CD8-positive, alpha-beta memory T cell (primary cell): ENCODE measurements at regions of chr20 and their contacts with region 1.

Region 1: GRCh38 chr20:44609511-44610312 is 27.3 kb downstream of the PKIG start:
- DNase-seq: peak; percentile 74 to 87 (median 78)
- H3K4me3 ChIP-seq: no peak overlapping the region
- H3K4me3 Mint-ChIP-seq: peak overlapping the region; percentile 64 to 88 (median 72)
- H3K27ac ChIP-seq: peak overlapping the region; percentile 28
- H3K27ac Mint-ChIP-seq: peak overlapping the region; percentile 93 to 100 (median 98)
- H3K4me1 ChIP-seq: peaks cover 30% of the 10 kb centered on the region
- H3K4me1 Mint-ChIP-seq: peaks cover 32 to 37% (median 34%) of the 10 kb centered on the region in 3 donors
- H3K27me3 ChIP-seq: no peaks in the 10 kb centered on the region
- H3K27me3 Mint-ChIP-seq: peaks cover 0 to 4% of the 10 kb centered on the region in 2 donors

Region 2: GRCh38 chr20:44388466-44389023 is 221.2 kb before region 1 on chr20:
- CTCF ChIA-PET with region 1: interaction called, 18 read pairs
- POLR2A ChIA-PET with region 1: no interaction called
- DNase-seq: peak; percentile 37 to 64 (median 39)
- H3K4me3 ChIP-seq: no peak overlapping the region
- H3K4me3 Mint-ChIP-seq: no peak overlapping the region
- H3K27ac ChIP-seq: no peak overlapping the region
- H3K27ac Mint-ChIP-seq: peak overlapping the region in 2 of 8 donors; percentile 42 to 68
- H3K4me1 ChIP-seq: peaks cover 7% of the 10 kb centered on the region
- H3K4me1 Mint-ChIP-seq: peaks cover 3 to 8% (median 7%) of the 10 kb centered on the region in 3 donors
- H3K27me3 ChIP-seq: no peaks in the 10 kb centered on the region
- H3K27me3 Mint-ChIP-seq: peaks cover 12 to 41% of the 10 kb centered on the region in 2 donors

Region 3: DNA sequence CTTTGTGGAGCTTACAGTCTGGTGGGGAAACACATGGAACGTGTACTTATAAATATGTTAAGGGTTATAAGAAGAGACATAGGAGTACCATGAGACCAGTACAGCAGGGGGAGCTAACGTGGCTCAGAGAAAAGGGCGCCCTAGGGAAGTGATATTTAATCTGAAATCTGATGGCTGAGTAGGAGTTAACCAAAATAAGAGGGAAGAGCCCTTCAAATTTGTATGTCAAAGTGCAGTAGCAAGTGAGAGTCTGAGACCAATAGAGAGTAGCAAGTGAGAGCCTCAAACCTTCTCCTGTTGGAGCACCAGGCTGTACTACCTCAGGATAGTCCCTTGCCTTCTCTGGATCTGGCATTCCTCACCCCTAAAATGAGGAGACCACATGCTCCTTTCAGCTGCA is 33.4 kb before region 1 on chr20:
- CTCF ChIA-PET with region 1: no interaction called
- POLR2A ChIA-PET with region 1: no interaction called
- DNase-seq: peak in 1 of 5 donors; percentile 3
- H3K4me3 ChIP-seq: no peak overlapping the region
- H3K4me3 Mint-ChIP-seq: no peak overlapping the region
- H3K27ac ChIP-seq: no peak overlapping the region
- H3K27ac Mint-ChIP-seq: peak overlapping the region in 2 of 8 donors; percentile 10 to 28
- H3K4me1 ChIP-seq: no peaks in the 10 kb centered on the region
- H3K4me1 Mint-ChIP-seq: peaks cover 9 to 14% (median 11%) of the 10 kb centered on the region in 3 donors
- H3K27me3 ChIP-seq: no peaks in the 10 kb centered on the region
- H3K27me3 Mint-ChIP-seq: peaks cover 0 to 7% of the 10 kb centered on the region in 2 donors

Region 4: DNA sequence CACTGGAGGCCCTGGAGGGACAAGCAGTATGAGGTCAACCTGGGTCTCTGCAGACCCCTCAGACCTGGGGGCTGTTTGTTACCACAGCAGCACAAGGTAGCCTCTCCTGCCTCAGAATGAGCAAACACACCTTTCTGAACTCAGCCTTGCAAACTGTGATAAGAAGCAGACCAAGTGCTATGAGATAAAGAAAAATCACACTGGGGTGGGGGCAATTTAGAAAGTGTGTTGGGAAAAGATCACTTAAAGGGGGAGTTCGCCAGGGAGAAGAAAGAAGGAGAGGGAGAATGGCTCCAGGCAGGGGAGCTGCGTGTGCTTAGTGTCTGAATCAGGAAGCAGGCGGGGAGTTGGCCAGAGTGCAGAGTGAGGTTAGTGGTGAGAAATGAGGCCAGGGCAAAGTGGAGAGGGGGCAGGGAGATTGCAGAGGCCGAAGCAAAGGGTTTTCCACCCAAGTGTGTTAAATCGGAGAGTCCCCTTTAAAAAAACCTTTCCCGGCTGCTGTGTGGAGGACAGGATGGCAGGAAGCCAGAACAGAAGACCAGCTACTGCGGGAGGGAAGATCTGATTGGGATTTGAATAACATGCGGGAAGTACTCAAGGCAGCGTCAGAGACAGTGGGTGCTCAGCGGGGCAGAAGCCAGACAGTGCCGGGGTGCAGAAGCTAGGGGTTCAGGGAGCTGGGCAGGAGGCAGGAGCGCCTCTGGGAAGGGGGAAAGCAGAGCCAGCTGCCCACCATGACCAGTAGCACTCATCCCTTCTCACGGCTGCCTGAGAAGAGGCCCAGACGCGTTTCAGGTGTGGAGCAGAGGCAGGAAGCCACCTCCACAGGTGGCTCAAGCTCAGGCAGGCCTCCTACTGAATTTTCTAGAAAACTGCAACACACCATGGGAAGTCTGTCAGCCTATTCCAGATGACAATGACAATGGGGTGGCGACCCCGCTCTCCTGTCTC is 32.8 kb after region 1 on chr20:
- CTCF ChIA-PET with region 1: interaction called, 20 read pairs
- POLR2A ChIA-PET with region 1: no interaction called
- DNase-seq: peak in 4 of 5 donors; percentile 17 to 53 (median 28)
- H3K4me3 ChIP-seq: peak overlapping the region; percentile 22
- H3K4me3 Mint-ChIP-seq: peak overlapping the region; percentile 32 to 86 (median 72)
- H3K27ac ChIP-seq: peak overlapping the region; percentile 69
- H3K27ac Mint-ChIP-seq: peak overlapping the region; percentile 92 to 100 (median 98)
- H3K4me1 ChIP-seq: peaks cover 69% of the 10 kb centered on the region
- H3K4me1 Mint-ChIP-seq: peaks cover 70 to 78% (median 75%) of the 10 kb centered on the region in 3 donors
- H3K27me3 ChIP-seq: no peaks in the 10 kb centered on the region
- H3K27me3 Mint-ChIP-seq: peaks cover 0 to 1% of the 10 kb centered on the region in 2 donors

Region 5: DNA sequence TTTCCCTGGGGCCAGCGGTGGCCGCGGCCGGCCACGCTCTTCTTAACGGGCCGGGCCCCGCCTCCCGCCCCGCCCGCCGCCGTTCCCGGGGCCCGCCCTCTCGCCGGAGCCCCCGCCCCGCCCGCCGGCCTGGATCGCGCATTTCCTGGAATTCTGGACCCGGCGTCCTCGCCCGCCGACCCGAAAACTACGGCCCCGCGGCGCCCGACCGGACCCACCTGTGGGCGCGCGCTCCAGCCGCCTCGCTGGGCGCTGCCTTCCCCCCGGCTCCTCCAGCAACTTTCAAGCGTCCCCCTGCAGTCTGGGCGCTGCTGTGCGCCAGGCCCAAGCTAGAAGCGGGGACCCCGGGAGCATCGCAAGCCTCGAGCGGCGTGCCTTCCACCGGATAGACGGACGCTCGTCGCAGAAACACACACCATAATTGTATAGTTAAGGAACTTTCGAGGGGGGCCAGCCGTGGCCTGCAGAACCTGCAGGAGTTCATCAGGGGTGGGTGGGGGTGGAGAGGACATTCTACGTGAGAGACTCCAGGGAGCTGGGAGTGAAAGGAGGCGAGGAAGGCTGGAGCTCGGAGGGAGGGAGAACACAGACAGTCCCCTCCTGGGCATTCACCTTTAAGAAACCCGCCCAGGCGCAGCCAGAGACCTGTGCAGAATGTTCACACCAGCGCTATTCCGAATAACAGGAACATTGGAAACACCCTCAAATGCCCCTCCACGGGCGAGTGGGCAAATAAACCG is 42.1 kb after region 1 on chr20 and contains the start of gene ADA:
- CTCF ChIA-PET with region 1: interaction called, 11 read pairs
- POLR2A ChIA-PET with region 1: interaction called, 3 read pairs
- DNase-seq: peak; percentile 45 to 69 (median 54)
- H3K4me3 ChIP-seq: peak within 1 kb of the TSS; percentile 85
- H3K4me3 Mint-ChIP-seq: peak within 1 kb of the TSS; percentile 83 to 95 (median 89)
- H3K27ac ChIP-seq: peak within 1 kb of the TSS; percentile 71
- H3K27ac Mint-ChIP-seq: peak within 1 kb of the TSS; percentile 79 to 98 (median 94)
- H3K4me1 ChIP-seq: peaks cover 50% of the 10 kb centered on the region
- H3K4me1 Mint-ChIP-seq: peaks cover 43 to 56% (median 55%) of the 10 kb centered on the region in 3 donors
- H3K27me3 ChIP-seq: no peaks in the 10 kb centered on the region
- H3K27me3 Mint-ChIP-seq: no peaks in the 10 kb centered on the region
- total RNA-seq, gene ADA: 21.1 to 21.3 TPM